ENCODE measurements at regions of chr9 and their contacts with region 1.

Region 1: DNA sequence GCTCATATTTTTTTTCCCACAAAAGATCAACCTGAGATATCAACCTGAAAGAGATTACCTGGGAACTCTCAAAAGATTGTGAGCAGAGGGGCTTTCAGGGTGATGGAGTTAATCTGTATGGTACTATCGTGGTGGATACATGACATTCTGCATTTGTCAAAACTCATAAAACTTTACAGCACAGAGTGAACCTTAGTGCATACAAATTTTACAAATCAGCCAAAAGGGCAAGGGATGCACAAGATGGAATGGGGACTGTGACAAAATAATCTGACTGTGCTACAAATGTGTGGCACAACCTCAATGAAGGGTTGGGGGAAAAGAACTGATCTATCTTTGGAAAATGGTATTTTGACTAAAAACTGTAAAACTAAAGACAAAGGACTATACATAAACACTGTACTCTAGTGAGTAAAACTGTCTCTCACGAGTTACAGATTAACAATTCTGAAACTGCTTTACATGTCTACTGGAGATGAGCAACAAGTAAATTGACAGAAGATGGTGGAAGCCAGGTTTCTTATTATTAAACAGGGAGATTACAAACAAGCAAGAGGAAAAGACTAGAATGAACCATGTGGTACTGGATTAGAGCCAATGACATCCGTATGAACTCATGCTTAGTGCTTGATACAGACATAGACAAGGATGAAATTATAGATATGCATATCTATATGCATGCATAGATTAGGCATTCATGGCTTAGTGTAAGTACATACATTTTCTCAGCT is 24.8 kb upstream of the RLN1 start:
- DNase-seq: no peak
- H3K4me3 ChIP-seq: no peak overlapping the region
- CTCF ChIP-seq: no peak

Region 2: GRCh38 chr9:5326893-5327548 is 37.4 kb before region 1 on chr9:
- in situ Hi-C with region 1: loop called (anchors 5 kb)
- DNase-seq: no peak
- H3K4me3 ChIP-seq: no peak overlapping the region
- CTCF ChIP-seq: no peak

Region 3: DNA sequence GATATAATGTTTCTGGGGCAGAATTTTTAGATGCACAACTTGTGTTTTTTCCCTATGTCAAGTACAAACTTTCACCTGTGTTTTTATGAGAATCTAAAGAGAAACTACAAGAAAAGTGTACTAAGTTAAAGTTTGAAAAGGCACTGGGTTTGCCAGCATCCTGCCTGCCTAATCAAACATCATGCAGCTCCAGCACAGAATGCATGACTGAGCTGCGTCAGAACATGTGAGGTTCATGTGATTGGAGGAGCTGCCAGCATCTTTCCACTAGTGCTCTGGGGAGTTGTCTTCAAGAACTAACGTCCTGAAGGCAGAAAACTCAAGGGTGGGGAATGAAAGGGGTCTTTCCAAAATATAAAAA is 218.4 kb after region 1 on chr9:
- in situ Hi-C with region 1: no loop called
- DNase-seq: peak; percentile 39
- H3K4me3 ChIP-seq: no peak overlapping the region
- CTCF ChIP-seq: no peak